ENCODE measurements at regions of chr1 and their contacts with region 1.

Region 1: DNA sequence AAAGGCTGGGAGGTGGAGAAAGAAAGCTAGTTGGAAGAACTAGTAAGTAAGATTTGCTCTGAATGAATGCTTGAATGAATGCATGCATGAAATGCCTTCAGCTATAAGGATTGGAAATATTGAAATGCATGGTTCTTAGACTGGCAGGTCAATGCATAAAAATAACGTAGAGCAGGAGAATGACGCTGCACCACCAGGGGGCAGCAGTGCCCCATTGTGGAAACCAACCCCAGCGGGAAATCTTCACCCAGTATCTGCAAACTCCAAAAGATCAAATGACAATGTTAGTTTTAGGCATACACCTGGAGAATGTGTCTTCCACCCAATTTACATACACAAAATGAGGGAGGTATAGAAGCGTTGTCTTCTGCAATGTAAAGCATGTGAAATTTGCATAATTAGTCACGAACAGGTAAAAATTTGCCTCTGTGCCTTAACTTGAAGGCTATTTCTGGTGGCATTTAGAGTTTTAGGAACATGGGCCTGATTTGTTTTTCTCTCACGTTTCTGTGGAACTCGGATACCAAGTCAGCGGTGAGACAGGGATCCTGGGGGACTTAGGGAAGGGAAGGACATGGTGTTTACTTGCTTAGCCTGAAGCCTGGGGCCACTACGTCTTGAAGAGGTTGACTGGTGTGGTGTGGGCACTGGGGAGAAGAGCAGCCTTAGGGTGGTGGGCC is 78.6 kb downstream of the HHAT start:
- DNase-seq: peak; percentile 44 to 68 (median 57)
- H3K4me3 ChIP-seq: no peak overlapping the region
- H3K4me3 Mint-ChIP-seq: no peak overlapping the region
- H3K27ac ChIP-seq: no peak overlapping the region
- H3K27ac Mint-ChIP-seq: no peak overlapping the region
- H3K4me1 ChIP-seq: no peaks in the 10 kb centered on the region
- H3K4me1 Mint-ChIP-seq: no peaks in the 10 kb centered on the region
- H3K27me3 ChIP-seq: no peaks in the 10 kb centered on the region
- H3K27me3 Mint-ChIP-seq: peaks cover 0 to 4% of the 10 kb centered on the region in 2 donors

Region 2: GRCh38 chr1:210373885-210374599 is 33.3 kb before region 1 on chr1:
- CTCF ChIA-PET with region 1: interaction called, 12 read pairs
- POLR2A ChIA-PET with region 1: no interaction called
- DNase-seq: peak in 4 of 5 donors; percentile 57 to 82 (median 62)
- H3K4me3 ChIP-seq: no peak overlapping the region
- H3K4me3 Mint-ChIP-seq: peak overlapping the region in 5 of 7 donors; percentile 17 to 67 (median 56)
- H3K27ac ChIP-seq: peak overlapping the region; percentile 20
- H3K27ac Mint-ChIP-seq: peak overlapping the region; percentile 74 to 92 (median 84)
- H3K4me1 ChIP-seq: no peaks in the 10 kb centered on the region
- H3K4me1 Mint-ChIP-seq: peaks cover 20 to 27% (median 25%) of the 10 kb centered on the region in 3 donors
- H3K27me3 ChIP-seq: no peaks in the 10 kb centered on the region
- H3K27me3 Mint-ChIP-seq: no peaks in the 10 kb centered on the region

Measured in CD8-positive, alpha-beta memory T cell (primary cell).